ENCODE measurements at regions of chr17 and their contacts with region 1.

Region 1: GRCh38 chr17:38351412-38352222 is at the start of gene SOCS7:
- DNase-seq: peak; percentile 96 to 98 (median 98)
- ATAC-seq: peak; percentile 98
- H3K4me3 ChIP-seq: peak within 1 kb of the TSS; percentile 88
- H3K27ac ChIP-seq: peak within 1 kb of the TSS; percentile 91
- H3K4me1 ChIP-seq: peaks cover 5% of the 10 kb centered on the region
- H3K27me3 ChIP-seq: no peaks in the 10 kb centered on the region
- total RNA-seq, gene SOCS7: 13.0 to 16.4 (median 14.7) TPM

Region 2: DNA sequence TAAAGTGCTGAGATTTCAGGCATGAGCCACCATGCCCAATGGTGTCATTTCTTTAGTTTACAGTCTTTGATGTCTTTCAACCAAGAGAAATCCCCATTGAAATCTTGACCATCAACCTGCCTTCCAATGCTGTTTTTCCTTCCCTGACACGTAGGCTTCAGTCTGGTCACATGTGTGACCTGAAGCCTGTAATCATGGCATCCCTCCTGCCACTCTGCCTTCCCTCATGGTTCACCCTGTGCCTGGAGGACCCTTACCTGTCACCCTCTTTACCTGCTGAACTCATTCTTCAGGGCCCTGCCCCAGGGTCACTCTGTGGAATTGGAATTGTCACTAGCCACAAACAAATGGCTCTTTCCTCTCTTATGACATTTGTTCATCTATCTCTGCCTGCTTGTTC is 58.6 kb after region 1 on chr17:
- intact Hi-C with region 1: loop called (anchors 2 to 5 kb)
- DNase-seq: no peak
- ATAC-seq: no peak
- H3K4me3 ChIP-seq: no peak overlapping the region
- H3K27ac ChIP-seq: no peak overlapping the region
- H3K4me1 ChIP-seq: no peaks in the 10 kb centered on the region
- H3K27me3 ChIP-seq: no peaks in the 10 kb centered on the region

Region 3: GRCh38 chr17:38415250-38416194 is 63.9 kb after region 1 on chr17:
- intact Hi-C with region 1: loop called (anchors 2 to 5 kb)
- DNase-seq: peak in 1 of 3 donors; percentile 57
- ATAC-seq: peak in 1 of 2 donors; percentile 8
- H3K4me3 ChIP-seq: no peak overlapping the region
- H3K27ac ChIP-seq: no peak overlapping the region
- H3K4me1 ChIP-seq: no peaks in the 10 kb centered on the region
- H3K27me3 ChIP-seq: no peaks in the 10 kb centered on the region

Region 4: GRCh38 chr17:38421171-38421841 is 69.7 kb after region 1 on chr17:
- intact Hi-C with region 1: loop called in 2 of 4 experiments (anchors 2 to 5 kb)
- DNase-seq: peak in 2 of 3 donors; percentile 63 to 75
- ATAC-seq: peak; percentile 27 to 38
- H3K4me3 ChIP-seq: no peak overlapping the region
- H3K27ac ChIP-seq: peak overlapping the region; percentile 73
- H3K4me1 ChIP-seq: peaks cover 8% of the 10 kb centered on the region
- H3K27me3 ChIP-seq: no peaks in the 10 kb centered on the region

Region 5: DNA sequence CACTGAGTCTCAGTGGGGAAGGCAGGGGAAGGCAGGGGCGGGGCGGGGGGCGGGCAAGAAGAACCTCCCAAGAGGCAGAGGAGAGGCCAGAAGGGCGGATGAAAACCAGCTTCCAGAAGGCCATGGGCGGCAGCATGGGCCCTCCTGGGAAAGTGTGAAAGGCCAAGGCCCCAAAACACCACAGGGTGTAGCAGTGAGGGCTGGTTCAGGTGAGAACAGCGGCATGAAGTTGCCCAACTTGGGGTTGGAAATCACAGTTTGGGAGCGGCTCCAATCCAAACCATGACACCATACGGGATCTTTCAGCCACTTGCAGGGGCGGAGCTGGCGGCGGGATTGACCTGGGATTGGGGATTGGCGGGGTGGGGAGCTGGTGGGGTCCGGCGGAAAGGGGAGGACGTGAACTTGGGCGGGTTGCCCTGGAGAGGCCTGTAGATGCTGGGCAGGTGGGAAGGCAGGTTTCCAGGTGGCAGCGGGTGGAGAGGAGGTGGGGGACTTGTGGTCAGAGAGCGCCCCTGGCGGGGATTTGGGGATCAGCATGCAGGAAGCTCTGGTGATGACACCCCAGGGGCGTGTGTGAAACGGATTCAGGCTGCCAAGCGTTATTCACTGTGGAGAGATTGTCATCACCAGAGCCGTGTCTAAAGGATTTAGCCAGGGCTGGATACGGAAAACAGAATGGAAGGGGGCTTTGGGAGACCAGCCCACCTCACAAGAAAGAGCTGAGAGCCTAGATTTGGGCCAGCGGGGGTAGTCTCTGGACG is 157.6 kb after region 1 on chr17:
- intact Hi-C with region 1: loop called in 1 of 4 experiments (anchors 10 kb)
- DNase-seq: peak; percentile 85 to 92 (median 92)
- ATAC-seq: peak; percentile 68 to 71
- H3K4me3 ChIP-seq: no peak overlapping the region
- H3K27ac ChIP-seq: no peak overlapping the region
- H3K4me1 ChIP-seq: peaks cover 7% of the 10 kb centered on the region
- H3K27me3 ChIP-seq: no peaks in the 10 kb centered on the region

Measured in right cardiac atrium (tissue), 5 donors.